ENCODE measurements at regions of chr15 and their contacts with region 1.

Region 1: DNA sequence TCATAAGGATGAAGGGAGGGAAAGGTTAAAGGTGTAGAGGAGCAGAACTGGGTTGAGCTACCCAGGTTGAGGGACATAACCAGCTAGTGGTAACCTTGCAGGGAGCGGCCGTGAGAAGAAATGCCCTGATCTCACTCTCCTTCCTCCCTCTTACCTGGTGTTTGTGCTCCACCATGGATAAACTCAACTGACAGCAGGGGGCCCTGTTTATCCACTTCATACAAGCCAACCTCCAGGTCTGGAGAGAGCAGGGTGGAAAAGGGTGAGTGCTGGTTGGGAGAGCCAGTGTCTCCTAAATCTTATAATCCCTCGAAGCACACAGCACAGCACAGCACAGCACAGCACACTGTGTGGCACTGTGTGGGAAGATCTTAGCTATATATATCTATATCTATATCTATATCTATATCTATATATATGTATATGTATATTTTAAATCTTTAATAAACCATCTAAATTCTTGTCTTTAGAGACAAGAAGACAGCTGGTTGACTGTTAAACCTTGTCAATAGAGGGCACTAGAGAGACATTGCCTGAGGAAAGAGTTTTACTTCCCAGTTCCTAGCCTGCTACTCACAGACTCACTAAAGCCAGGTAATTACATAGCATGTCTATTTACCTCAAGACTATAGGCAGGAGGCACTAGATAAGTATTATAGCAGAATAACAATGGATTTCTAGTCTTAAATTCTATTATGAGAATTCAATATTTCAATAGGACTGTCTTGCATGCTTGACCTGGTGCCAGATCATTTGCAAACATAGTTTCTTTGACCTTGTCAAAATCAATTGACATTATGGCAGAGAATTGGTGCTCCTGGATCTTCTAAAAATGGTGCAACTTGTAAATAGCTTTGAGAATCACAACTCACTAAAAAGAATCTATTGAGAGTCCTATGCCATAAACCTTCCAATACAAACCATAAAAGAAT is 21.7 kb upstream of the FMN1 start:
- DNase-seq: no peak
- ATAC-seq: no peak
- H3K4me3 Mint-ChIP-seq: no peak overlapping the region
- H3K27ac Mint-ChIP-seq: no peak overlapping the region
- H3K4me1 Mint-ChIP-seq: no peaks in the 10 kb centered on the region
- H3K27me3 Mint-ChIP-seq: no peaks in the 10 kb centered on the region

Region 2: GRCh38 chr15:33201491-33202231 is 14.5 kb before region 1 on chr15:
- CTCF ChIA-PET with region 1: interaction called, 13 read pairs
- POLR2A ChIA-PET with region 1: no interaction called
- DNase-seq: peak; percentile 70
- ATAC-seq: peak; percentile 95
- H3K4me3 Mint-ChIP-seq: peak overlapping the region; percentile 45
- H3K27ac Mint-ChIP-seq: peak overlapping the region; percentile 80
- H3K4me1 Mint-ChIP-seq: peaks cover 33% of the 10 kb centered on the region
- H3K27me3 Mint-ChIP-seq: no peaks in the 10 kb centered on the region